HEK293 (cell line): ENCODE measurements at regions of chr19 and their contacts with region 1.

Region 1: DNA sequence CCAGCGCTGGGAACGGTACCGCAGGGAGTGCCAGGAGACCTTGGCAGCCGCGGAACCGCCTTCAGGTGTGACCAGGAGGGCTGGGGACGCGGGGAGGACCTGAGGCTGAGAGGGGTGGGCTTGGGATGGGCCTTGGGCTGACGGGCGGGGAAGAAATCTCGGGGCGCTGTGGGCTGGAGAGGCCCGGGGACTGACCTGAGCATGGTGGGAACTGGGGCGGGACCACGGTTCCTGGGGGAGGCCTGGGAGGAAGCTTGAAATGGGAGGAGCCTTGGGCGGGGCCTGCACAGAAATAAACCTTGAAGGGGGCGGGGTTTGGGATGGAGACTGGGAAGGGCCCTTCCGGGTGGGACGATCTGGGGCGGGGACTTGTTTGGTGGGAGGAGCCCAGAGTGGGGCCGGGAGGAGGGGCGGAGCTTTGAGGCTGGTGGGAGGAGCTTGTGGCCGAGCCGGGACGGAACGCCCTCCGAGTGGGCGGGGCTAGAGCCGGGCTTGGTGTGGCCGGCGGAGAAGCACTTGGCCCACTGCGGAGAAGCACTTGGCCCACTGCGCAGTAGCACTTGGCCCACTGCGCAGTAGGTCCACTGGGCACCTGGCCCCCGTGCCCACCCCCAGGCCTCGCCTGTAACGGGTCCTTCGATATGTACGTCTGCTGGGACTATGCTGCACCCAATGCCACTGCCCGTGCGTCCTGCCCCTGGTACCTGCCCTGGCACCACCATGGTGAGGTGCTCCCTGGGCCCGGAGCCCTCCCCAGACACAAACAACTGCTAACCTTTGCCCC is 2.8 kb downstream of the GIPR start:
- H3K4me3 ChIP-seq: no peak overlapping the region
- H3K27ac ChIP-seq: no peak overlapping the region
- H3K4me1 ChIP-seq: peaks cover 10% of the 10 kb centered on the region
- CTCF ChIP-seq: no peak

Region 2: GRCh38 chr19:45591004-45591637 is 79.7 kb before region 1 on chr19:
- CTCF ChIA-PET with region 1: no interaction called
- POLR2A ChIA-PET with region 1: no interaction called
- H3K4me3 ChIP-seq: no peak overlapping the region
- H3K27ac ChIP-seq: no peak overlapping the region
- H3K4me1 ChIP-seq: no peaks in the 10 kb centered on the region
- CTCF ChIP-seq: no peak

Region 3: GRCh38 chr19:45681391-45682015 is 10.6 kb after region 1 on chr19:
- CTCF ChIA-PET with region 1: interaction called, 31 read pairs
- POLR2A ChIA-PET with region 1: interaction called, 9 read pairs
- H3K4me3 ChIP-seq: peak overlapping the region; percentile 25
- H3K27ac ChIP-seq: no peak overlapping the region; the same call in 1 of the 2 replicates
- H3K4me1 ChIP-seq: peaks cover 11% of the 10 kb centered on the region
- CTCF ChIP-seq: peak; percentile 97